Mammary epithelial cell (primary cell): ENCODE measurements at regions of chr3 and their contacts with region 1.

Region 1: GRCh38 chr3:19946832-19947548 is at the start of gene RAB5A:
- DNase-seq: peak; percentile 99
- H3K4me3 ChIP-seq: peak within 1 kb of the TSS; percentile 66 to 99 (median 97)
- H3K27ac ChIP-seq: peak within 1 kb of the TSS; percentile 83
- H3K4me1 ChIP-seq: peaks cover 22% of the 10 kb centered on the region
- H3K27me3 ChIP-seq: no peaks in the 10 kb centered on the region
- CTCF ChIP-seq: no peak
- total RNA-seq, gene RAB5A: 68.3 to 76.3 TPM

Region 2: GRCh38 chr3:19711160-19711782 is 235.7 kb before region 1 on chr3:
- CTCF ChIA-PET with region 1: no interaction called
- dilution Hi-C with region 1: no loop called
- in situ Hi-C with region 1: no loop called
- intact Hi-C with region 1: no loop called
- DNase-seq: no peak
- H3K4me3 ChIP-seq: no peak overlapping the region
- H3K27ac ChIP-seq: no peak overlapping the region
- H3K4me1 ChIP-seq: no peaks in the 10 kb centered on the region
- H3K27me3 ChIP-seq: no peaks in the 10 kb centered on the region
- CTCF ChIP-seq: no peak

Region 3: GRCh38 chr3:19885468-19885867 is 61.5 kb before region 1 on chr3:
- CTCF ChIA-PET with region 1: no interaction called
- dilution Hi-C with region 1: no loop called
- in situ Hi-C with region 1: no loop called
- intact Hi-C with region 1: loop called (anchors 2 kb)
- DNase-seq: peak; percentile 13
- H3K4me3 ChIP-seq: no peak overlapping the region
- H3K27ac ChIP-seq: no peak overlapping the region
- H3K4me1 ChIP-seq: peaks cover 14% of the 10 kb centered on the region
- H3K27me3 ChIP-seq: no peaks in the 10 kb centered on the region
- CTCF ChIP-seq: peak; percentile 49 to 61

Region 4: DNA sequence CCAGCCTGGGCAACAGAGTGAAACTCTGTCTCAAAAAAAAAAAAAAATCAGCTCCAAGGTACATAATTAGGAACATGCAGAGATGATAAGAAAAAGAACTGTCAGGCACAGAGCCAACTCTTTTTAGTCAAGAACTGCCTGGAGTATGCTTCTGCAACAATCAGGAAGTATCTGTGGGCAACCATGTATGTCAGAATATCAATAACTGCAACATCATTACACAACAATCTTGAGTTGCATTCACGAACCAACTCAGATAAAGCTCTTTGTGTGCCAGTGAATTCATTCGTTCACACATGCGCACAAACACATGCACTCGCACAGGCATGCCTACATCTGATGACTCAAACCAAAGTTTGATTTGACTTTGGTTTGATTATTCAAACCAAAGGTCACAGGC is 45.1 kb before region 1 on chr3:
- CTCF ChIA-PET with region 1: interaction called, 18 read pairs
- dilution Hi-C with region 1: loop called (anchors 5 kb)
- in situ Hi-C with region 1: no loop called
- intact Hi-C with region 1: no loop called
- DNase-seq: peak; percentile 85
- H3K4me3 ChIP-seq: no peak overlapping the region
- H3K27ac ChIP-seq: no peak overlapping the region
- H3K4me1 ChIP-seq: peaks cover 5% of the 10 kb centered on the region
- H3K27me3 ChIP-seq: no peaks in the 10 kb centered on the region
- CTCF ChIP-seq: no peak

Region 5: DNA sequence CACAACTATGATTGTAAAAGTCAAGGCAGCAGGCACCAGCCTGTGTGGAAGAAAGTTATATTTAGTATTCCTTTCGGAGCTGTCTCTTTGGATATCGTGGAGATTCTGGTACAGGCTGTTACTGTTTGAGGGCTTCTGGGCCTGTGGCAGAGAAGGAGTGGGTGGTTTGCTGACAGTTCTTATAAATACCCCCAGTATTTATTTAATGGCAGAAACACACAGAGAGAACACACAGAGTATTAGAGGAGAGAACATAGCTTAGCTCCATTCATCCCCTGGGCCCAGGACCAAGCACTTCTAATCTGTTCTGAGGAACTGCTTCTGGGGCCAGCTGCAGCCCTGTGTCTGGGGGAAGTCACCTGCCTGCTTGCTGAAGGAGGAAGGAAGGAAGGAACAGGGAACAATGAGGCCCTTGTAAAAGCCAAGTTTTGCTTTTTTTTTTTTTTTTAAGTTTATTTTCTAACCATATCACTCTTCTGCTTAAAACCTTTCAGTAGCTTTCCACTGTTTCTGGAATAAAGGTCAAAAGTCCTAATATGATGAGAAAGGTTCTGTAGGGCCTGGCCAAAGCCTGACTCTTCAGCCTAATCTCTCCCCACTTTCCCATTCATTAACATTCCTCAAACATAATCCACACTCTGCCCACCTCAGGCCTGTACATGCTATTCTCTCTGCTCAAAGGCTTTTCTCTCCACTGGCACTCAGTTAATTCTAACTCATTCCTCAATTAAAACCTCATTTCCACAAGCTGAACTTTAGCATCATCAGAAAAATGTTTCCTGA is 76.8 kb after region 1 on chr3:
- CTCF ChIA-PET with region 1: no interaction called
- dilution Hi-C with region 1: no loop called
- in situ Hi-C with region 1: no loop called
- intact Hi-C with region 1: no loop called
- DNase-seq: no peak
- H3K4me3 ChIP-seq: no peak overlapping the region
- H3K27ac ChIP-seq: no peak overlapping the region
- H3K4me1 ChIP-seq: no peaks in the 10 kb centered on the region
- H3K27me3 ChIP-seq: no peaks in the 10 kb centered on the region
- CTCF ChIP-seq: no peak

Region 6: GRCh38 chr3:20039766-20040475 is 92.9 kb after region 1 on chr3 and contains the start of gene KAT2B:
- CTCF ChIA-PET with region 1: no interaction called
- dilution Hi-C with region 1: no loop called
- in situ Hi-C with region 1: no loop called
- intact Hi-C with region 1: loop called (anchors 1 kb)
- DNase-seq: peak; percentile 64
- H3K4me3 ChIP-seq: peak within 1 kb of the TSS; percentile 76 to 96 (median 89)
- H3K27ac ChIP-seq: peak within 1 kb of the TSS; percentile 20
- H3K4me1 ChIP-seq: peaks cover 23% of the 10 kb centered on the region
- H3K27me3 ChIP-seq: no peaks in the 10 kb centered on the region
- CTCF ChIP-seq: peak; percentile 13 to 75
- total RNA-seq, gene KAT2B: 8.6 to 16.2 TPM

Region 7: GRCh38 chr3:20054549-20054987 is 107.6 kb after region 1 on chr3:
- CTCF ChIA-PET with region 1: no interaction called
- dilution Hi-C with region 1: no loop called
- in situ Hi-C with region 1: no loop called
- intact Hi-C with region 1: loop called (anchors 2 kb)
- DNase-seq: peak; percentile 99
- H3K4me3 ChIP-seq: no peak overlapping the region
- H3K27ac ChIP-seq: peak overlapping the region; percentile 32
- H3K4me1 ChIP-seq: peaks cover 37% of the 10 kb centered on the region
- H3K27me3 ChIP-seq: no peaks in the 10 kb centered on the region
- CTCF ChIP-seq: no peak

Region 8: DNA sequence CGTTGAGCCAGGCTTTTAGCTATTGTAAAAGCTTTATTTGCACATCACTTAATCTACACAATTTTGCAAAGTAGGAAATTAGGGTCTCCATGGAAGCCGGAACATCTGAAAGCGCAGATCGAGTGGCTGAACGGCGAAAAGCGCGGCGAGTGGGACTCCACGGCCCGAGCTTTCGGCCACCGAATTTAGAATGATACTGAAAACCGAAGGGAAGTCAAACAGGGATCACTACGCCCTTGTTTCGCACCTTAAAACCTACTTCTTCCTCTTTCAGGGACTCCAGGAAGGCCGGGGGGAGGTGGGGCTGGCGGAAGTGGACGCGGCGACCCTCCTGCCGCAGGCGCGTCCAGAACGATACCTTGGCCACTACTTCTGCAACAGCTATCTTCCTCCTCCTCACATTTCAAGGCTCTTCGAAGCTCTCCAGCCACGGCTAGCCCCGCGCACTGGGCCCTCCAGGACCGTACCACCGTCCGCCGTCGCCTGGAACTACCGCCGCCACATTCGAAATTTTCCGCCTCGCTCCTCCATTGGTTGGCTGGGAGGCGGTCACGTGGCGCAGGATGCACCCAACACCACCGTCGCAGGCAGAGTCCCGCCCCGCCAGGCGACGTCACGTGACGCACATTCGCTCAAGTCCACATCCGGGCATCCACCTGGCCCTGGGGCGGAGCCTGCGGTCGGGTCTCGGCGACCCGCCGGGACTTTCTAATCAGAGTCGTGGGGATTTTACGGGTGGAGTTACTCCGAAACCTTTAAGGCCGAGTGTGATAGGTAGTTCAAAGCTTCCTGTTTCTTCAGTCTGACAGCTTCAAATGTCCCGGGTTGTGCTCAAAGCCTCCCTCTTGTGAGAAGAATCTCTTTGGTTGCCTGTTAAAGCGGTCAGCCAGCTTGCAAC is 239.0 kb after region 1 on chr3 and contains the start of gene SGO1:
- CTCF ChIA-PET with region 1: no interaction called
- dilution Hi-C with region 1: loop called (anchors 10 kb)
- in situ Hi-C with region 1: no loop called
- intact Hi-C with region 1: loop called (anchors 1 kb)
- DNase-seq: peak; percentile 99
- H3K4me3 ChIP-seq: peak within 1 kb of the TSS; percentile 86 to 94 (median 91)
- H3K27ac ChIP-seq: peak within 1 kb of the TSS; percentile 93
- H3K4me1 ChIP-seq: peaks cover 13% of the 10 kb centered on the region
- H3K27me3 ChIP-seq: no peaks in the 10 kb centered on the region
- CTCF ChIP-seq: peak in 1 of 2 donors; percentile 23
- total RNA-seq, gene SGO1: 0.50 to 13.6 TPM